ENCODE measurements at regions of chr1 and their contacts with region 1.

Region 1: GRCh38 chr1:224434691-224435317 is at the start of gene WDR26:
- DNase-seq: peak; percentile 85 to 93 (median 87)
- H3K4me3 ChIP-seq: peak within 1 kb of the TSS; percentile 73 to 96
- H3K4me3 Mint-ChIP-seq: peak within 1 kb of the TSS; percentile 93 to 97 (median 97)
- H3K27ac ChIP-seq: peak within 1 kb of the TSS; percentile 94
- H3K27ac Mint-ChIP-seq: peak within 1 kb of the TSS; percentile 97 to 99 (median 99)
- H3K4me1 ChIP-seq: peaks cover 57% of the 10 kb centered on the region
- H3K4me1 Mint-ChIP-seq: peaks cover 39 to 69% (median 49%) of the 10 kb centered on the region in 4 donors
- H3K27me3 ChIP-seq: no peaks in the 10 kb centered on the region
- H3K27me3 Mint-ChIP-seq: no peaks in the 10 kb centered on the region
- total RNA-seq, gene WDR26: 121 to 123 TPM

Region 2: GRCh38 chr1:224113918-224114786 is 320.7 kb before region 1 on chr1 and contains the start of gene FBXO28:
- CTCF ChIA-PET with region 1: interaction called, 10 read pairs
- POLR2A ChIA-PET with region 1: interaction called, 7 read pairs
- intact Hi-C with region 1: no loop called
- DNase-seq: peak; percentile 87 to 95 (median 89)
- H3K4me3 ChIP-seq: peak within 1 kb of the TSS; percentile 53 to 54
- H3K4me3 Mint-ChIP-seq: peak within 1 kb of the TSS; percentile 87 to 97 (median 94)
- H3K27ac ChIP-seq: peak within 1 kb of the TSS; percentile 97
- H3K27ac Mint-ChIP-seq: peak within 1 kb of the TSS; percentile 84 to 97 (median 95)
- H3K4me1 ChIP-seq: peaks cover 32% of the 10 kb centered on the region
- H3K4me1 Mint-ChIP-seq: peaks cover 17 to 32% (median 24%) of the 10 kb centered on the region in 4 donors
- H3K27me3 ChIP-seq: no peaks in the 10 kb centered on the region
- H3K27me3 Mint-ChIP-seq: peaks cover 0 to 2% of the 10 kb centered on the region in 2 donors
- total RNA-seq, gene FBXO28: 36.4 to 39.7 TPM

Region 3: GRCh38 chr1:224356685-224357625 is 77.8 kb before region 1 on chr1 and contains the start of gene CNIH4:
- CTCF ChIA-PET with region 1: interaction called, 3 read pairs
- POLR2A ChIA-PET with region 1: interaction called, 12 read pairs
- intact Hi-C with region 1: loop called (anchors 1 kb)
- DNase-seq: peak; percentile 92 to 95 (median 94)
- H3K4me3 ChIP-seq: peak within 1 kb of the TSS; percentile 51 to 63
- H3K4me3 Mint-ChIP-seq: peak within 1 kb of the TSS; percentile 90 to 99 (median 94)
- H3K27ac ChIP-seq: peak within 1 kb of the TSS; percentile 72
- H3K27ac Mint-ChIP-seq: peak within 1 kb of the TSS; percentile 73 to 98 (median 93)
- H3K4me1 ChIP-seq: peaks cover 27% of the 10 kb centered on the region
- H3K4me1 Mint-ChIP-seq: peaks cover 26 to 54% (median 39%) of the 10 kb centered on the region in 4 donors
- H3K27me3 ChIP-seq: no peaks in the 10 kb centered on the region
- H3K27me3 Mint-ChIP-seq: no peaks in the 10 kb centered on the region
- total RNA-seq, gene CNIH4: 45.5 to 50.9 TPM

Region 4: GRCh38 chr1:224377676-224378006 is 57.2 kb before region 1 on chr1:
- CTCF ChIA-PET with region 1: interaction called, 3 read pairs
- POLR2A ChIA-PET with region 1: interaction called, 43 read pairs
- intact Hi-C with region 1: loop called (anchors 10 kb)
- DNase-seq: no peak
- H3K4me3 ChIP-seq: no peak overlapping the region
- H3K4me3 Mint-ChIP-seq: peak overlapping the region in 7 of 8 donors; percentile 39 to 83 (median 72)
- H3K27ac ChIP-seq: no peak overlapping the region
- H3K27ac Mint-ChIP-seq: peak overlapping the region; percentile 52 to 96 (median 87)
- H3K4me1 ChIP-seq: peaks cover 97% of the 10 kb centered on the region
- H3K4me1 Mint-ChIP-seq: peaks cover 66 to 97% (median 86%) of the 10 kb centered on the region in 4 donors
- H3K27me3 ChIP-seq: no peaks in the 10 kb centered on the region
- H3K27me3 Mint-ChIP-seq: no peaks in the 10 kb centered on the region

Region 5: DNA sequence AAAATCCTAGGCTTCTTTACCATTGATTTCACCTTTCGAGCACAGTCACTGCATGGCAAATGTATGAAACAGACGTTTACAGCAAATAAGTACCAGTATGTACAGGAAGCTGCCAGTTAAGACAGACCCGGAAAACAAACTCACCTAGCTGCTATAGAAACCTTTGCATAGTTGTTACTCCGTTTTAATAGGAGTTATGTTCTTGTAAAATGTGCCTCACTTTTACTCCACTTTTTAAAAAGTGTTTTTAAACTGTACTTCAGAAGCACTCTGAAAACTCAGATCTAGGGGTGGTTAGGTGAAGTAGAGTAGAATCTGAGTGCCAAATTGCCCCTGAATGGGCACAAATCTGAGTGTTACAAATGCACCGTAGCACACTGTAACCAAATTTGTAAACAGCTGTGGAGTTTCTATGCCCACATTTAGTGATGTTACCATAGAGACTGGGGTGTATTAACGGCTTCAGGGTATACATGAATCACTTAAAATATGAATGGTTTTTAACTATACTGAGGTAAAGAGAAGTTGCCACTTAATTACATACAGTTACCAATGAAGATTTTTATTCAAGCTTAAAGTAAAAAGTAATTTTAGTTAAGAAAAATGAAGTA is 47.4 kb before region 1 on chr1:
- CTCF ChIA-PET with region 1: no interaction called
- POLR2A ChIA-PET with region 1: interaction called, 16 read pairs
- intact Hi-C with region 1: loop called (anchors 10 kb)
- DNase-seq: peak; percentile 45 to 68 (median 56)
- H3K4me3 ChIP-seq: no peak overlapping the region
- H3K4me3 Mint-ChIP-seq: peak overlapping the region in 6 of 8 donors; percentile 25 to 68 (median 54)
- H3K27ac ChIP-seq: peak overlapping the region; percentile 37
- H3K27ac Mint-ChIP-seq: peak overlapping the region; percentile 54 to 92 (median 83)
- H3K4me1 ChIP-seq: peaks cover 49% of the 10 kb centered on the region
- H3K4me1 Mint-ChIP-seq: peaks cover 35 to 48% (median 41%) of the 10 kb centered on the region in 4 donors
- H3K27me3 ChIP-seq: no peaks in the 10 kb centered on the region
- H3K27me3 Mint-ChIP-seq: no peaks in the 10 kb centered on the region

Region 6: DNA sequence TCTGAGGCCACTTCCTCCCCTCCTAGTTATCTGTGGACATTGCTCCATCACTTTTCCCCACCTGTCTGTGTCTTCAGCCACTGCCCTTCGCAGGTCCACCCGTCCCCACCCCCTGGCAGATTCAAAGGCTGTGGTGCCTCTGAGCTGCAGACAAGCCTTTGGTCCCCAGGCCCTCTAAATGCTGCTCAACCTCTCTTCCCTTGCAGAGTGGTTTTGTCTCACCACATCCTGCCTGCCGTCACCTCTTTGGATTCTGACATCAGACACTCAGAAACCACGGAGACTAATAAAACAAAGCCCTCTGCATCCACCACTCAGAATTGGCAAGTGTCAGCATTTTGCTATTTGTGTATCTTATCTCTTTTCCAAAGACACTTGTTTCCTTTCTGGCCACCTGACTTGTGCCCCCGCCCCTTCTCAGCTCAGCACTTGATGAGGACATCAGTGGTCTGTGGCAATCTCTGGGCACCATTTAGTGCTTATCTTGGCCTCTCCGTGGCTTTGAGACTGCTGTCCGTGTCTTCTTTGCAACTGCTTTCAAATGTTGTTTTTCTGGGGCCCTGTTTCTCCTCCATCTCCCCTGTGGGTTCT is 189.0 kb after region 1 on chr1:
- CTCF ChIA-PET with region 1: no interaction called
- POLR2A ChIA-PET with region 1: interaction called, 5 read pairs
- intact Hi-C with region 1: loop called (anchors 5 kb)
- DNase-seq: peak; percentile 89 to 93 (median 91)
- H3K4me3 ChIP-seq: peak overlapping the region in 1 of 2 donors; percentile 16
- H3K4me3 Mint-ChIP-seq: peak overlapping the region; percentile 63 to 91 (median 80)
- H3K27ac ChIP-seq: peak overlapping the region; percentile 59
- H3K27ac Mint-ChIP-seq: peak overlapping the region; percentile 88 to 99 (median 98)
- H3K4me1 ChIP-seq: peaks cover 36% of the 10 kb centered on the region
- H3K4me1 Mint-ChIP-seq: peaks cover 27 to 57% (median 37%) of the 10 kb centered on the region in 4 donors
- H3K27me3 ChIP-seq: peaks cover 5% of the 10 kb centered on the region
- H3K27me3 Mint-ChIP-seq: peaks cover 15 to 26% of the 10 kb centered on the region in 2 donors

Region 7: GRCh38 chr1:224684979-224685425 is 250.2 kb after region 1 on chr1:
- CTCF ChIA-PET with region 1: no interaction called
- POLR2A ChIA-PET with region 1: no interaction called
- intact Hi-C with region 1: no loop called
- DNase-seq: no peak
- H3K4me3 ChIP-seq: no peak overlapping the region
- H3K4me3 Mint-ChIP-seq: no peak overlapping the region
- H3K27ac ChIP-seq: no peak overlapping the region
- H3K27ac Mint-ChIP-seq: no peak overlapping the region
- H3K4me1 ChIP-seq: no peaks in the 10 kb centered on the region
- H3K4me1 Mint-ChIP-seq: no peaks in the 10 kb centered on the region
- H3K27me3 ChIP-seq: no peaks in the 10 kb centered on the region
- H3K27me3 Mint-ChIP-seq: peaks cover 2 to 5% of the 10 kb centered on the region in 2 donors

Measured in CD4-positive, alpha-beta memory T cell (primary cell).